Motor neuron (in vitro differentiated cells): ENCODE measurements at regions of chr11 and their contacts with region 1.

Region 1: GRCh38 chr11:42524534-42525227 is 787.1 kb upstream of the API5 start:
- ATAC-seq: peak; percentile 89 to 96 (median 92)
- H3K4me3 ChIP-seq: no peak overlapping the region
- H3K27ac ChIP-seq: no peak overlapping the region
- H3K4me1 ChIP-seq: peaks cover 29 to 41% of the 10 kb centered on the region in 2 donors

Region 2: GRCh38 chr11:41461057-41461681 is 1063.5 kb before region 1 on chr11:
- in situ Hi-C with region 1: loop called in 1 of 9 experiments (anchors 25 kb)
- ATAC-seq: no peak
- H3K4me3 ChIP-seq: no peak overlapping the region
- H3K27ac ChIP-seq: no peak overlapping the region
- H3K4me1 ChIP-seq: peaks cover 6 to 20% of the 10 kb centered on the region in 2 donors

Region 3: DNA sequence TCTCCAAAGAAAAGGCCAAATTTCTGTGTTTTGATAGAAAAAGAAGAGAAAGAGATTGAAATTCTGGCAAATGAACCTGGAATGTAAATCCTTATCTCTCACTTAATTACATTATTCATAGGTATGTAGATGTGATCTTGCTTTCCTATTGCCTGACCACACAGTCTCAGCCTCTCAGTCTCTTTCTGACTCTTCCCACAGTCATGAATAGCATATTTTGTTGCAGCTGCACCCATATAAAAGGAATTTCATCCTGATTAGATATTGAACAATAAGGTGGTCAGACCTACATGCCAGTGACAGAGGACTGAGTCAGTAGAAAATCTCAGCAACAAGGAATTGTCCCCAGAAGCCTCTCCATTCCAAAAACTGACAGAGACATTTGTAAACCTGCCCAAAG is 1002.3 kb before region 1 on chr11:
- in situ Hi-C with region 1: loop called in 1 of 9 experiments (anchors 25 kb)
- ATAC-seq: peak in 2 of 8 experiments; percentile 60 to 92
- H3K4me3 ChIP-seq: no peak overlapping the region
- H3K27ac ChIP-seq: no peak overlapping the region
- H3K4me1 ChIP-seq: peaks cover 0 to 10% of the 10 kb centered on the region in 2 donors